Breast epithelium (tissue), 4 donors: ENCODE measurements at regions of chr11 and their contacts with region 1.

Region 1: GRCh38 chr11:70338594-70338993 is 59.7 kb upstream of the CTTN start:
- DNase-seq: no peak
- H3K4me3 ChIP-seq: no peak overlapping the region
- H3K27ac ChIP-seq: no peak overlapping the region
- H3K4me1 ChIP-seq: no peaks in the 10 kb centered on the region
- H3K27me3 ChIP-seq: no peaks in the 10 kb centered on the region
- CTCF ChIP-seq: no peak
- POLR2A ChIP-seq: no peak

Region 2: GRCh38 chr11:70834984-70835560 is 496.5 kb after region 1 on chr11:
- intact Hi-C with region 1: loop called (anchors 5 kb)
- DNase-seq: no peak
- H3K4me3 ChIP-seq: no peak overlapping the region
- H3K27ac ChIP-seq: no peak overlapping the region
- H3K4me1 ChIP-seq: no peaks in the 10 kb centered on the region
- H3K27me3 ChIP-seq: peaks cover 0 to 6% of the 10 kb centered on the region in 2 donors
- CTCF ChIP-seq: no peak
- POLR2A ChIP-seq: no peak